AG04449 (cell line): ENCODE measurements at regions of chr1 and their contacts with region 1.

Region 1: DNA sequence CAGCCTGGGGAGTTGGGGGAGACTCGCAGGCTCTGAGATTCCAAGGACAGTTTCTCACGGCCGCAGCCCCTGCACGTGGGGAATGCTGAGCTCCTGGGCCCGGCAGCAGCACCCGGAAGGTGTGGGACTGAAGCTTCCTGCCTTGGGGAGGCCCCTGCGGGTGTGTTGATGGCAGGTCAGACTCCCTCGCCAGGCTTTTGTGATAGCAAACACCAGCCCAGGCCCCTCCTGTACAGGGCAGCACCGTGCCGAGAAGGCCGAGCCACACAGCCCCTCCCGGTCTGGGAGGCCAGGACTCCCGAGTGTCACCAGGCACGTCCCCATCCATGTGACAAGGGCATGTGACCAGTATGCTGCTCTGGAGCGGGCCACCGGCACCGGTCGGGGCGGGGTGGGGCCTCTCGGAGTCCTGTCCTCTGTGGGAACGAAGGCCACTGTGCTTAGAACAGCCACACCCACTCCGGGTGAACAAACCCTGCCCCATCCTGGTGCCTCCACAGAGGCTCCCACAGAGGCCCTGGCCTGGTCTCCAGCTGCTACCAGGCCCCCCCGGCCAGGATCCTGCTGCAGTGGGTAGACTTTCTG is 31.1 kb upstream of the ARHGEF16 start:
- DNase-seq: no peak
- H3K4me3 ChIP-seq: no peak overlapping the region
- CTCF ChIP-seq: no peak

Region 2: GRCh38 chr1:2412519-2413233 is 1010.7 kb before region 1 on chr1 and contains the start of gene PEX10:
- CTCF ChIA-PET with region 1: interaction called, 13 read pairs
- POLR2A ChIA-PET with region 1: no interaction called
- DNase-seq: peak; percentile 24
- H3K4me3 ChIP-seq: peak within 1 kb of the TSS; percentile 87
- CTCF ChIP-seq: no peak

Region 3: GRCh38 chr1:3369446-3370076 is 53.8 kb before region 1 on chr1:
- CTCF ChIA-PET with region 1: no interaction called
- POLR2A ChIA-PET with region 1: no interaction called
- DNase-seq: peak; percentile 83
- H3K4me3 ChIP-seq: no peak overlapping the region
- CTCF ChIP-seq: no peak

Region 4: DNA sequence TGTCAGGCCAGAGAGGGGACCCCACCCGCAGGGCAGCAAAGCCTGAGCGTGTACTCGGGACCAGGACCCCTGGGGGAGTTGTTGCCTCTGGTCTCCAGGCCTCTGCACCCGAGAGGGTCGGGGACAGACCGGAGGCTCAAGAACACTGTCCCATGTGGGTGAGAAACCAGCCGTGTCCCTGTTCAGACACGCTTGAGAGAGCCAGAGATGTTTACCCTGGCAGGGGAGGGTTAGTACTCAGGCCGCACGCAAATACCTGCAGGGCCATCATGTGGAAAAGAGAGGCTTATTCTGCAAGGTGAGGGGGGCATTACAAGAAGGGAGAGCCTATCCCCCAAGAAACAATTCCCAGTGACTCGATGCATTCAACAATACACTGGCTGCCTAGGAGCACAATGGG is 42.9 kb before region 1 on chr1:
- CTCF ChIA-PET with region 1: no interaction called
- POLR2A ChIA-PET with region 1: no interaction called
- DNase-seq: no peak
- H3K4me3 ChIP-seq: no peak overlapping the region
- CTCF ChIP-seq: no peak